Mammary epithelial cell (primary cell): ENCODE measurements at regions of chr17 and their contacts with region 1.

Region 1: GRCh38 chr17:49227436-49228261 is 2.9 kb downstream of the PHOSPHO1 start:
- DNase-seq: peak; percentile 48
- H3K4me3 ChIP-seq: no peak overlapping the region
- H3K27ac ChIP-seq: no peak overlapping the region
- H3K4me1 ChIP-seq: peaks cover 14% of the 10 kb centered on the region
- H3K27me3 ChIP-seq: peaks cover 17% of the 10 kb centered on the region
- CTCF ChIP-seq: peak; percentile 82 to 91

Region 2: GRCh38 chr17:48671697-48672171 is 555.9 kb before region 1 on chr17:
- CTCF ChIA-PET with region 1: no interaction called
- dilution Hi-C with region 1: no loop called
- in situ Hi-C with region 1: no loop called
- intact Hi-C with region 1: loop called (anchors 5 kb)
- DNase-seq: peak; percentile 46
- H3K4me3 ChIP-seq: peak overlapping the region; percentile 40 to 55 (median 49)
- H3K27ac ChIP-seq: no peak overlapping the region
- H3K4me1 ChIP-seq: no peaks in the 10 kb centered on the region
- H3K27me3 ChIP-seq: no peaks in the 10 kb centered on the region
- CTCF ChIP-seq: peak; percentile 76 to 93

Region 3: DNA sequence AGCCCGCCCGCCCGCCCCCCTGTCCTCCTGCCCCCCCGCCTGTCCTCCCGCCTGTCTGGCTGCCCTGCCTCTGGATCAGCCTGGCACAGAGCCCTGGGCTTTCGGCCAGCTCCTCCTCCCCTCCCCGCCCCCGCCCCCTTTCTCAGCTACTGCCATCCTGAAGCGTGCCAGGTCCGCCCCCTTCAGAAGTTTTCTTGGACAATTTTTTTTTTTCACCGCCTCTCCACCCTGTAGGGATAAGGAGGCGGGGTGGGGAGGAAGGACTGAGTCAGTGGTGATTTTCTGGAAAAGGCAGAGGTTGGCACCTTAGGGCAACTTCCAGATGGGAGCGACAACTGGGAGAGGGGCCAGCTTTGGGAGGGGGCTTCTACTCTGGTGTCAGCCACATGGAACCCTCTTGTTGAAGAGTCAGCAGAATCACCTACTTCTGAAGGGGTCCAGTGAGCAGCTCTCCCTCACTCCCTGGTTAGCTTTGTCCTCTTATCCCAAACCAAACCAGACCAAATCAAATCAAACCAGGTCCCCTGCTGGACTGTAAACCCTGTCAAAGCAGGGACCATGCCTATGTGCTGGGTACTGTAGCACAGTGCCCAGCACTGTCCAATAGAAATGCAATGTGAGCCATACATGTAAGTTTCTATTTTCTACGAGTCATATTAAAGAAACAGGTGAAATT is 210.7 kb before region 1 on chr17:
- CTCF ChIA-PET with region 1: no interaction called
- dilution Hi-C with region 1: no loop called
- in situ Hi-C with region 1: no loop called
- intact Hi-C with region 1: no loop called
- DNase-seq: peak; percentile 55
- H3K4me3 ChIP-seq: no peak overlapping the region
- H3K27ac ChIP-seq: no peak overlapping the region
- H3K4me1 ChIP-seq: peaks cover 7% of the 10 kb centered on the region
- H3K27me3 ChIP-seq: peaks cover 35% of the 10 kb centered on the region
- CTCF ChIP-seq: no peak

Region 4: GRCh38 chr17:49146620-49147306 is 80.9 kb before region 1 on chr17:
- CTCF ChIA-PET with region 1: no interaction called
- dilution Hi-C with region 1: loop called (anchors 5 kb)
- in situ Hi-C with region 1: no loop called
- intact Hi-C with region 1: no loop called
- DNase-seq: peak; percentile 97
- H3K4me3 ChIP-seq: no peak overlapping the region
- H3K27ac ChIP-seq: peak overlapping the region; percentile 67
- H3K4me1 ChIP-seq: peaks cover 13% of the 10 kb centered on the region
- H3K27me3 ChIP-seq: no peaks in the 10 kb centered on the region
- CTCF ChIP-seq: no peak

Region 5: GRCh38 chr17:49191917-49192741 is 35.5 kb before region 1 on chr17:
- CTCF ChIA-PET with region 1: no interaction called
- dilution Hi-C with region 1: no loop called
- in situ Hi-C with region 1: no loop called
- intact Hi-C with region 1: loop called (anchors 2 kb)
- DNase-seq: peak; percentile 92
- H3K4me3 ChIP-seq: peak overlapping the region; percentile 71 to 78 (median 74)
- H3K27ac ChIP-seq: peak overlapping the region; percentile 81
- H3K4me1 ChIP-seq: peaks cover 4% of the 10 kb centered on the region
- H3K27me3 ChIP-seq: no peaks in the 10 kb centered on the region
- CTCF ChIP-seq: peak in 1 of 2 donors; percentile 30

Region 6: DNA sequence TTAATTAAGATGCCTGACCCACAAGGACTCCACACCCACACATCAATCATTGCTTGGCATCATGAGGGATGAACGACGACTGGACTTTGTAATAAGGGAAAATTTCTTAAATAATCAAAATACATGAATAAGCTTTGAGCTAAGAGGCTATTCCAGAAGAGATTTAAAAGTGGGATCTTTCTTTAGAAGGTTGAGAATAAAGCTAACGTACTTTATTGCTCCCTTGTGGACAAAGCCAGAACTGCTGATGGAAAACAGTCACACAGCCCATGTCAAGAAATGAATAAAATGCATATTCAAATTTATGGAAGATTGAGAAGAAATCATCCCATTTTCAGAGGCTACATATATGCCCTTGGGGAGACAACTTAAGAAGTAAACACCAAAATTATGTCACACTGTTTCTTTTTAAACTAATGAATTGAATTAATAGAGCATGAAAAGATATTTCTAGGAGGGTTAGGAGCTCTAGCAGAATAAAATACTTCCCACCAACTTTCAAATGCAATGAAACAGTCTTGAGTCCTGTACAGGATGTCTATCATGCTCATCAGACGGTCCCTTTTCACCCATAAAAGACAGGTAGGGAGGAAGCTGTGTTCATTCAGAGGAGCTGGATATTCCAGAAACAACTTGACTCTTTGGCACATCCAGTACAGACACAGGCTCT is 63.2 kb after region 1 on chr17:
- CTCF ChIA-PET with region 1: no interaction called
- dilution Hi-C with region 1: no loop called
- in situ Hi-C with region 1: no loop called
- intact Hi-C with region 1: loop called (anchors 5 kb)
- DNase-seq: no peak
- H3K4me3 ChIP-seq: no peak overlapping the region
- H3K27ac ChIP-seq: no peak overlapping the region
- H3K4me1 ChIP-seq: no peaks in the 10 kb centered on the region
- H3K27me3 ChIP-seq: no peaks in the 10 kb centered on the region
- CTCF ChIP-seq: peak; percentile 73 to 83

Region 7: GRCh38 chr17:49305926-49306325 is 78.3 kb after region 1 on chr17:
- CTCF ChIA-PET with region 1: no interaction called
- dilution Hi-C with region 1: no loop called
- in situ Hi-C with region 1: no loop called
- intact Hi-C with region 1: no loop called
- DNase-seq: no peak
- H3K4me3 ChIP-seq: no peak overlapping the region
- H3K27ac ChIP-seq: no peak overlapping the region
- H3K4me1 ChIP-seq: no peaks in the 10 kb centered on the region
- H3K27me3 ChIP-seq: no peaks in the 10 kb centered on the region
- CTCF ChIP-seq: no peak